Activated CD4-positive, alpha-beta T cell treated with anti-CD3 and anti-CD28 coated beads for 36 hours (primary cell): ENCODE measurements at regions of chr4 and their contacts with region 1.

Region 1: GRCh38 chr4:141220655-141221605 is at the start of gene ZNF330:
- DNase-seq: peak; percentile 93
- ATAC-seq: peak; percentile 85
- H3K4me3 Mint-ChIP-seq: peak within 1 kb of the TSS; percentile 92
- H3K27ac Mint-ChIP-seq: peak within 1 kb of the TSS; percentile 97
- H3K4me1 Mint-ChIP-seq: peaks cover 41% of the 10 kb centered on the region
- H3K27me3 Mint-ChIP-seq: no peaks in the 10 kb centered on the region
- total RNA-seq, gene ZNF330: 40.5 to 65.7 TPM

Region 2: DNA sequence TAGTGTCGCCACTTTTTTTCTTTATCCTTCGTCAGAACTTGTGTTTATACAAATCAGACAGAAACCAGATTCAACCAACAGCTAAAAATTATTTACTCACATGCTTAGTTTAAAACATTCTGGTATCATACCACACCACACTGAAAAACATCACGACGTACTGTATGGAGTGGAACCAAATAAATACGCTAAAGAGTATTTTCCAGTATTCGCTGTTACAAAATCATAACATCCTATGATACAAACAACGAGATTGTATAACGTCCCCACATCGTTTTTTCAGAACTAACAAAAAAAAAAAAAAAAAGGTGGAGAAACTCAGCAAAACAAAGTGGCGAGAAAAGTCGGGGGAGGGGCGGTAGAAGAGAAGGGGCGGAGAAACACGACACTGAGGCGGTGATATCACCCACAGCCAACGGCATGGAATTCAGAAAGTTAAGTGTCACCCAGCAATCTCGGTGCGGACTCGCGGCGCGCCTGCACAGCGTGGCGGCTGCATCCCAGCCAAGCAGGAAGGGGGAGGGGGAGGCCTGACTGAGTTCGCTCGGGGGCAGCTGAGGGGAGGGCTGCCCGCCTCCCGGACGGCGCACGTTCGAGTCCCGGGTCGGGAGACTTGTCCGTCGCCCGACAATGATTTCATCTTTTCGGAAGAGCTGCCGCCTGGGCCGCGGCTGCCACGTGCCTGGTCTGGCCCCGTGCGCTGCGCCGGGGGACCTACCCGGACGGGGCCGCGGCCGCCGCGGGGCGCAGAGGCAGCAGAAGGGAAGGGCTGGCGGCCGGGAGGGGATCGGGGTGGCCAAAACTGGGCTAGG is 1665.8 kb before region 1 on chr4:
- CTCF ChIA-PET with region 1: no interaction called
- POLR2A ChIA-PET with region 1: no interaction called
- intact Hi-C with region 1: loop called in 1 of 2 experiments (anchors 5 kb)
- DNase-seq: peak; percentile 91
- ATAC-seq: peak; percentile 76
- H3K4me3 Mint-ChIP-seq: peak overlapping the region; percentile 96
- H3K27ac Mint-ChIP-seq: peak overlapping the region; percentile 91
- H3K4me1 Mint-ChIP-seq: peaks cover 45% of the 10 kb centered on the region
- H3K27me3 Mint-ChIP-seq: no peaks in the 10 kb centered on the region

Region 3: DNA sequence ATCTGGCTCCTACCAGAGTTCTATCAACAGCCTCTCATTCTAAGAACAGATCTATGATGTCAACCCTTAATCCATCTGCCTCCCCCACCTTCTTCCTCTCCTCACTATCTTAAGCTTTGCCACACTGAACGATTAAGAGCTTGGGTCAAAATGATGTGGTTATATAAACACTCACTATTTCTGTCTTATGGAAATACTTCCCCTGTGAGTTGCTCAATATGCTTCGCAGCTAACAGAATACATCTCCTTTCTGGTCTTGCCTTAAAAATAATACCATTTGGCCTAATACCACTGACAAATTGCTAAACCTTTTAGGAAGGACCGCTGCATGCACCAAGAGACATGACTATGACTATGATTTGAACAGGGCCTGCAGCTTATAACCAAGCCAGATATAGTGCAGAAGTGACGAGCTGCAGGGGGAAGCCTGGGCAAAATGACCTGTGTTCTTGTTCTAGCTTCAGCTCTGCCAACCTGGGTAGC is 218.6 kb before region 1 on chr4:
- CTCF ChIA-PET with region 1: no interaction called
- POLR2A ChIA-PET with region 1: no interaction called
- intact Hi-C with region 1: no loop called
- DNase-seq: no peak
- ATAC-seq: no peak
- H3K4me3 Mint-ChIP-seq: no peak overlapping the region
- H3K27ac Mint-ChIP-seq: no peak overlapping the region
- H3K4me1 Mint-ChIP-seq: no peaks in the 10 kb centered on the region
- H3K27me3 Mint-ChIP-seq: peaks cover 6% of the 10 kb centered on the region

Region 4: GRCh38 chr4:141109983-141110382 is 110.9 kb before region 1 on chr4:
- CTCF ChIA-PET with region 1: no interaction called
- POLR2A ChIA-PET with region 1: no interaction called
- intact Hi-C with region 1: no loop called
- DNase-seq: no peak
- ATAC-seq: no peak
- H3K4me3 Mint-ChIP-seq: no peak overlapping the region
- H3K27ac Mint-ChIP-seq: no peak overlapping the region
- H3K4me1 Mint-ChIP-seq: no peaks in the 10 kb centered on the region
- H3K27me3 Mint-ChIP-seq: peaks cover 8% of the 10 kb centered on the region

Region 5: DNA sequence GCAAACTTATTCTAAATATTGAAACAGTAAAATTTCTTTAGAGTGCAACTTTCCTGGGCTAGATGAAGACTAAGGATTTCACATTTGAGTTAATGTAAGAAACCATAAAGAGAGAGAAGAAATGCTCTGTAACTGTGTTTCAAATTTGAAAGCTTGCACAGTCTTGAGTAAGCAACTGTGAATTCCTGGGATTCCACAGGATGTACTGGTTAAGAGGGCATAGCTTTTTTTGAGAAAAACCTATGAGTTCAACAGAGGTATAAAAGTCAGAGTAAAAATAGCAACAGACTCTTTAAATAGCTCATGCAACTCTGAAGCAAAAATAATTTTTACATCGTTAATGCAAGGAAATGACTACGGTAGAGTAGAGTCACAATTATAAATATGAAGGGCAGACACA is 25.3 kb after region 1 on chr4:
- CTCF ChIA-PET with region 1: no interaction called
- POLR2A ChIA-PET with region 1: no interaction called
- intact Hi-C with region 1: loop called in 1 of 2 experiments (anchors 1 kb)
- DNase-seq: no peak
- ATAC-seq: no peak
- H3K4me3 Mint-ChIP-seq: no peak overlapping the region
- H3K27ac Mint-ChIP-seq: no peak overlapping the region
- H3K4me1 Mint-ChIP-seq: no peaks in the 10 kb centered on the region
- H3K27me3 Mint-ChIP-seq: peaks cover 2% of the 10 kb centered on the region

Region 6: GRCh38 chr4:141636082-141636770 is 415.3 kb after region 1 on chr4 and contains the start of gene IL15:
- CTCF ChIA-PET with region 1: no interaction called
- POLR2A ChIA-PET with region 1: no interaction called
- intact Hi-C with region 1: loop called (anchors 2 to 10 kb)
- DNase-seq: peak; percentile 85
- ATAC-seq: peak; percentile 90
- H3K4me3 Mint-ChIP-seq: peak within 1 kb of the TSS; percentile 86
- H3K27ac Mint-ChIP-seq: peak within 1 kb of the TSS; percentile 67
- H3K4me1 Mint-ChIP-seq: peaks cover 18% of the 10 kb centered on the region
- H3K27me3 Mint-ChIP-seq: peaks cover 20% of the 10 kb centered on the region
- total RNA-seq, gene IL15: 0.37 to 1.1 TPM

Region 7: DNA sequence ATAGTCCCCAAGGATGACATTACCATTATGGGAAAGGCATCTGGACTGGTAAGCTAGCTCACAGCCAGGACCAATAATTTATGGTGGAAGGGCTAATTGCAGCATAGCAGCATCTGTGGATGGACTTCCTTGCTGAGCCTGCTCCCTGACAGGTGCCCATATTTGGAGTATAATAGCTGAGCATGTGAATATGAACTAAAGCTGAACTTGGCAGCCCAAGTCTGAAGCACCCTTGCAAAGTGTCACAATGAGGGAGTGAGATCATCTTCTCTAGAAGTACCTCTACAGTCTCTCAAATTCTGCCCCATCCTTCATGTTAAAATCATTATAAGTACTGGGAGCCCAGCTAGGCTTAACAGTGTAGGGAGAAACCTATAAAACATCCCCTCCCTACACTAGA is 1753.4 kb after region 1 on chr4:
- CTCF ChIA-PET with region 1: no interaction called
- POLR2A ChIA-PET with region 1: no interaction called
- intact Hi-C with region 1: no loop called
- DNase-seq: no peak
- ATAC-seq: no peak
- H3K4me3 Mint-ChIP-seq: no peak overlapping the region
- H3K27ac Mint-ChIP-seq: no peak overlapping the region
- H3K4me1 Mint-ChIP-seq: no peaks in the 10 kb centered on the region
- H3K27me3 Mint-ChIP-seq: peaks cover 14% of the 10 kb centered on the region